MCF 10A (cell line): ENCODE measurements at regions of chr17 and their contacts with region 1.

Region 1: GRCh38 chr17:76612977-76613851 is 27.6 kb upstream of the ST6GALNAC2 start:
- DNase-seq: peak; percentile 94
- H3K4me3 Mint-ChIP-seq: no peak overlapping the region
- H3K27ac Mint-ChIP-seq: no peak overlapping the region
- H3K4me1 Mint-ChIP-seq: peaks cover 11% of the 10 kb centered on the region
- H3K27me3 Mint-ChIP-seq: no peaks in the 10 kb centered on the region
- CTCF ChIP-seq: peak; percentile 14

Region 2: DNA sequence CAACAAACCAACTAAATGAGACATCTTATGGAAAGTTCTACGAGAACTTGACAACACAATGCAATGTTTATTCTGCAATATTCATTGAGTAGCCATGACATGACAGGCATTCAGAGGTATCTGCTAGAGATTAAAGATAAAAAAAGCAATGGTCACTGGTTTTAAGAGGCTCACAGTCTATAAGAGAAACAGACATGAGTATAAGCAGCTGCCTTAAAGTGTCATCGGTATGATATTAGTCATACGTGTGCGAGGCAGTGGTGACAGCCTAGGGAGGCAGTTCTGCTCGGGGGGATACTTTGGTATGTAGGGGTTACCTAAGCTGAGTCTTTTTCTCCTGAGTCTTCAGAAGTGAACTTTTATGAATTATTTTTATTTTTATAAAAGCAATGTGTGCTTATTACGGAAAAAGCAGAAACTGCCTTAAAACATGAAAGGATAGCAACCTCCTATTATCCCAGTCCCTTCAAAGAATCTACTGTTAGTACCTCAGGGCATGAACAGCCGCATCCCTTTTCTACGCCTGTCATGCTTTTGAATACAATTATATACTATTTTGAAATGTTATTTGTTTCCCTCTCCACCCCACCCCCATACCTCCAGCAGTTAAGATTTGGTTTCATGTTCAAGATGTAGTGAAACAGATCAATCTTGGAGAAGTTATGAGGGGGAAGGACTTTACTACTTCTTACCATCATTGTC is 22.6 kb after region 1 on chr17:
- CTCF ChIA-PET with region 1: no interaction called
- POLR2A ChIA-PET with region 1: no interaction called
- intact Hi-C with region 1: loop called (anchors 2 kb)
- DNase-seq: no peak
- H3K4me3 Mint-ChIP-seq: no peak overlapping the region
- H3K27ac Mint-ChIP-seq: no peak overlapping the region
- H3K4me1 Mint-ChIP-seq: peaks cover 1% of the 10 kb centered on the region
- H3K27me3 Mint-ChIP-seq: no peaks in the 10 kb centered on the region
- CTCF ChIP-seq: no peak

Region 3: DNA sequence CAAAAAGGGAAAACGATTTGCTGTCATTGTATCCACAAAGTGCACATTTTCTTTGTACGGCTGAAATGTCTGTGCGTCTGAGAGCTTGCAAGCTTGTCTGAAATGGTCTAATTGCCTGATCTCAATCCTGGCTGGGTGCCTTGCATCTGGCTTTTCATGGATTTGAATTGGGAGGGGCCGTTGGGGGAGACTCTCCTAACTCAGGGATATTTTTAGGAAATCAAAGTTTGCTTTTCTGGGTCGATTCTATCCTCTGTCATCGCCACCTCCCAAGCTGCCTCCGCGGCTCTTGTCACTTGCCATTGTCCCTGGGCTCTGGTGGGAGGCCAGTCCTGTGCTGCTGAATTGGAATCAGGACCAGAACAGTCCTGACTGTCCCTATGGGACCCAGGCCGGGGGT is 221.7 kb after region 1 on chr17:
- CTCF ChIA-PET with region 1: no interaction called
- POLR2A ChIA-PET with region 1: no interaction called
- intact Hi-C with region 1: no loop called
- DNase-seq: no peak
- H3K4me3 Mint-ChIP-seq: no peak overlapping the region
- H3K27ac Mint-ChIP-seq: no peak overlapping the region
- H3K4me1 Mint-ChIP-seq: peaks cover 9% of the 10 kb centered on the region
- H3K27me3 Mint-ChIP-seq: peaks cover under 1% of the 10 kb centered on the region
- CTCF ChIP-seq: no peak